Ascending aorta (tissue), 2 donors: ENCODE measurements at regions of chr22 and their contacts with region 1.

Region 1: DNA sequence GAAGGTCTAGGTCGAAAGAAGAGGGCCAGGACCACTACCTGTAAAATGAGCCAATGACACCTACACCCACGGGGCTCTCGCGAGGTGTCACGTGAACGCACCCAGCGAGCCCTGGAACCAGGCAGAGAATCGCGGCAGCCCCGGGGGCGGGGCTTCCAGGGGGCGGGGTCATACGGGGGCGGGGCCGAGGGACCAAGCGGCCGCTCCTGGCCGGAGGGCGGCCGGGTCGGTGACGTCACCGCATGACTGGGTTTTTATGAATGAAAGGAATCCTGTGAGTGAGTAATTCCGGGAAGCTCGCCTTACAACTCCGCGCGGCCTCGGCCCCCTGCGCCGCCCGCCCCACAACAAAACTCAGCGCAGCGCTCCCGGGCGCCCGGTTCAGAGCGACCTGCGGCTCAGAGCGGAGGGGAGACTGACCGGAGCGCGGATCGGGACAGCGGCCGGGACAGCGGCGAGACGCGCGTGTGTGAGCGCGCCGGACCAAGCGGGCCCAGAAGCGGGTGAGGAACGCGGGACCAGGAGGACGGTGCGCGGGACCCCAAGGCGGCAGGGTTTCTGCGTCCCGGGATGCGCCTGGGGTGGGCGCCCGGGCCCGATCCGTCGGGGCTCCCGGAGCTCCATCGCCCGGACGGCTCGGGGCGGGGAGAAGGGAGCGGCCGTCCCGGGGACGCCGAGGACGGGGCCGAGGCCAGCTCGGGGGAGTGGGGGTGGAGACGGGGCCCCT is at the start of gene MAFF:
- DNase-seq: peak; percentile 88 to 99
- H3K4me3 ChIP-seq: peak within 1 kb of the TSS; percentile 87 to 89
- H3K27ac ChIP-seq: peak within 1 kb of the TSS; percentile 99 to 100
- H3K4me1 ChIP-seq: peaks cover 19 to 26% of the 10 kb centered on the region in 2 donors
- H3K27me3 ChIP-seq: no peaks in the 10 kb centered on the region
- CTCF ChIP-seq: no peak
- total RNA-seq, gene MAFF: 183 TPM

Region 2: DNA sequence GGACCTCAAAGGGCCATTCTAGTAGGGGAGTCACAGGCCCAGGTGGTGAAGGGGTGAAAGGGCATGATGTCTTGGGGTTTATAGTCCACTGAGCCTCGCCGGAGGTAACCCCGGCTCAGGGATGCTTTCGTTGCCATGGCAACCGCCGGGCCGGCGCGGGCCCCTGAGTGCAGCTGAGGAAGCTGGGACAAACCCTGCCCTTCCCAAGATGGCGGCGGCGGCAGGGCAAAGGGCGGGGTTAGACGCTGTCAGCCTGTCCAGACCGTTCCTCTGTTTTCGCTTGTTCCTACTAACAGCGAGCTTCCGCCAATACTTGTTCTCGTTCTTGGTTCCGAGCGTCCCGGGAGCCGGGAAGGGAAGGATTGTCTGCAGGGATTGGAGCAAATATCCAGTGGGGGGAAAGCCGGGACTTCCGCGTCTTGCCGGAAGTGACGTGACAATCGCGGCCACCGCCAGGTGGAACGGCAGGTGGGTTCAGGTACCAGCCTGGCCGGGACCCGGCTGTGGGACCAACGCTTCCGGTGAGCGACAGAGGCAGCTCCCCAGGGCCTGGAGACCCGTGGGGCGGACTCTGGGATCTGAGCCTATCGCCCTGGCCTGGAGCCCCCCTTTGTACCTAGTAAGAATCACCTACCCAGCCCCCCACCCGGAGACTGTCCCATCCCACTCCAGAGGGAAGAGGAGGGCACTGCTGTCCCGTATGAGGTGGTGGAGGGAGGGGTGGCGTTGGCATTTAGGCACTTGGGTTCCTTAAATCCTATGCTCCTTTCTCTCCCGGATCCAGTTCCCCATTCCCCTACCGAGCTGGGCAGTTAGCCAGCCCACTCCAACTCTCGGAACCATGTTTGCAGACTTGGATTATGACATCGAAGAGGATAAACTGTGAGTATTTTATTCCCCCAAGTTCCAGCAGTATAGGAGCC is 144.6 kb before region 1 on chr22 and contains the start of gene PICK1:
- intact Hi-C with region 1: loop called (anchors 1 kb)
- DNase-seq: peak; percentile 85 to 97
- H3K4me3 ChIP-seq: peak within 1 kb of the TSS; percentile 65 to 70
- H3K27ac ChIP-seq: peak within 1 kb of the TSS; percentile 92 to 93
- H3K4me1 ChIP-seq: peaks cover 7 to 8% of the 10 kb centered on the region in 2 donors
- H3K27me3 ChIP-seq: no peaks in the 10 kb centered on the region
- CTCF ChIP-seq: no peak
- total RNA-seq, gene PICK1: 88.1 TPM

Region 3: GRCh38 chr22:38214256-38215056 is 12.6 kb after region 1 on chr22:
- intact Hi-C with region 1: loop called (anchors 2 kb)
- DNase-seq: no peak
- H3K4me3 ChIP-seq: peak overlapping the region in 1 of 2 donors; percentile 50
- H3K27ac ChIP-seq: peak overlapping the region; percentile 30 to 35
- H3K4me1 ChIP-seq: peaks cover 21 to 29% of the 10 kb centered on the region in 2 donors
- H3K27me3 ChIP-seq: no peaks in the 10 kb centered on the region
- CTCF ChIP-seq: peak in 1 of 3 experiments; percentile 24

Region 4: DNA sequence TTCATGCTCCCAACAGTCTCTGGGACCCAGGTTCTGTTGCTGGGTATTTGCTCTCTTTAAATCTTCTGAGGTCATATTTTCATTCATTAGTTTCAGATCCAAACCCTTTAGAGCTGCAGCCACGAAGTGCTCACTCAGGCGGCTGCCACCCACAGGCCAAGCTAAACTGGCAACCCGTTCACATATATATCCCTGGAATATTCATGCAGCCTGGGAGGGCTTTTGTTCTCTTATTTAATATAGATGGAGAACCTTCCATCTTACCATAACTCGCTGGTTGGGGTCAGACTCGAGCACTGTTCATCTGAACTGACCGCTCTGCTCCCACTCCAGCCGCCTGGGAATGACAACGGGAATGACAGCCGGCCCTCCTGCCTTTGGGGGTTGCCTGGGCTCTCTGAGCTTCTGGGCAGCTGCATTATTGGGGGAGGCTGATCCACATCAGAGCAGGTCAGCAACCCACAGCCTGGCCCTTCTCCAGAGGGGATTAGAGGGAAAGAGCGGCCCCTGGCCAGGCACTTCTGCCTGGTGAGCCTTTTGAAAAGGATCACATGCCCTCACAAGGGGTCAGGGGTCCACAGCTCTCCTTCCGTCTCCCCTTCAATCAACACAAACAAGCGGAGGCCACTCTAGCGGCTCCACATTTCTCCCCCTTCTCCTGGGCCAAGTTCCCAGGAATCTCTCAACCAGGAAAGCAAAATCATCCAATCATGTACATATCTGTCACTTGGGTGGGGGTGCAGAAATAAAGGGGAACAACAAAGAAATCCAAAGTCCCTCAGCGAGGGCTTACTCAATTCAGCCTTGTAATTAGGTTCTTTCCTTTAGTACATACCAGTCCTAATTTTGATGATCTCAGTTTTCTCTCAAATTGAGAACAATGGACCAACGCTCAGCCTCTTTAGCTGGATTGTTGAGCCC is 59.1 kb after region 1 on chr22:
- intact Hi-C with region 1: loop called (anchors 5 kb)
- DNase-seq: no peak
- H3K4me3 ChIP-seq: peak overlapping the region in 1 of 2 donors; percentile 16
- H3K27ac ChIP-seq: peak overlapping the region; percentile 83 to 88
- H3K4me1 ChIP-seq: peaks cover 12 to 50% of the 10 kb centered on the region in 2 donors
- H3K27me3 ChIP-seq: no peaks in the 10 kb centered on the region
- CTCF ChIP-seq: peak in 2 of 3 experiments; percentile 14 to 37

Region 5: DNA sequence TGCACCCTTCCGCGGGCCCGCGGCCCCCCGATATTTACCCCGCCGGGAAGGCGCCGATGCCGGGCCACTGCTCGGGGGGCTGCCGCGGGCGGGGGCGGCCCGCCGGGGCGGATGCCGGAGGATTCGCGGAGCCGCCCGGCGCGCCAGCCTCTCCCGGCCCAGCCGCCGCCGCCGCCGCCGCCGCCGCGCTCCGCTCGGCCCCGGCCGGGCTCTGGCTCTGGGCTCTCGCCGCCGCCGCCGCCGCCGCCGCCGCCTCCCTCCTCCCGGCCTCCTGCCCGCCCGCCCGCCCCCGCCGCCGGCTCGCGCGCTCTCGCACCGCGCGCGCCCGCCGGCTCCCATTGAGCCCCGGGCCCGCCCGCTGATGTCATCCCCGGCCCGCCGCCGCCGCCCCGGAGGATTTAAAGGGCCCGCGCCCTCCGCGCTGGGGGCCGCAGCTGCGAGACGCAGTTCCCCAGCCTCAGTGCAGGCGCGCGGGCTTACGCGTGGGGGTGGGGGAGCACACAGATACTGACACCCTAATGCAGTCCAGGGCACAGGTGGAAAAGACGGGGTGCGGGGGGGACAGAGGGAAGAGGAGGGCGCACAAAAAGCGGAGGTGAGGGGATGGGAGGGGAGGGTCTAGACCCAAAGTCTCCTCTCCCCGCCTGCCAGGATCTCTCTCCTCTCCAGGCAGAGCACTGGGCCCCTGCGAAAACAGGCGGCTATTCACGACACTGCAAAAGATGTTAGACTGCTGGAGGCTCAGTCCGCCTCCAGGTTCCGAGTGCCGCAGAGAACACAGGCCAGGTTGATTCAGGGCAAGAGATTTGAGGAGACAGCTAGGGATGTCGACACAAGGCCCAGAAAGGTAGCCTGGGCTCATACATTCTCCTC is 115.5 kb after region 1 on chr22 and contains the start of gene CSNK1E:
- intact Hi-C with region 1: loop called (anchors 2 kb)
- DNase-seq: peak; percentile 31 to 88
- H3K4me3 ChIP-seq: peak within 1 kb of the TSS; percentile 69 to 92
- H3K27ac ChIP-seq: peak within 1 kb of the TSS; percentile 97 to 100
- H3K4me1 ChIP-seq: peaks cover 10 to 37% of the 10 kb centered on the region in 2 donors
- H3K27me3 ChIP-seq: no peaks in the 10 kb centered on the region
- CTCF ChIP-seq: no peak
- total RNA-seq, gene CSNK1E: 185 TPM

Region 6: DNA sequence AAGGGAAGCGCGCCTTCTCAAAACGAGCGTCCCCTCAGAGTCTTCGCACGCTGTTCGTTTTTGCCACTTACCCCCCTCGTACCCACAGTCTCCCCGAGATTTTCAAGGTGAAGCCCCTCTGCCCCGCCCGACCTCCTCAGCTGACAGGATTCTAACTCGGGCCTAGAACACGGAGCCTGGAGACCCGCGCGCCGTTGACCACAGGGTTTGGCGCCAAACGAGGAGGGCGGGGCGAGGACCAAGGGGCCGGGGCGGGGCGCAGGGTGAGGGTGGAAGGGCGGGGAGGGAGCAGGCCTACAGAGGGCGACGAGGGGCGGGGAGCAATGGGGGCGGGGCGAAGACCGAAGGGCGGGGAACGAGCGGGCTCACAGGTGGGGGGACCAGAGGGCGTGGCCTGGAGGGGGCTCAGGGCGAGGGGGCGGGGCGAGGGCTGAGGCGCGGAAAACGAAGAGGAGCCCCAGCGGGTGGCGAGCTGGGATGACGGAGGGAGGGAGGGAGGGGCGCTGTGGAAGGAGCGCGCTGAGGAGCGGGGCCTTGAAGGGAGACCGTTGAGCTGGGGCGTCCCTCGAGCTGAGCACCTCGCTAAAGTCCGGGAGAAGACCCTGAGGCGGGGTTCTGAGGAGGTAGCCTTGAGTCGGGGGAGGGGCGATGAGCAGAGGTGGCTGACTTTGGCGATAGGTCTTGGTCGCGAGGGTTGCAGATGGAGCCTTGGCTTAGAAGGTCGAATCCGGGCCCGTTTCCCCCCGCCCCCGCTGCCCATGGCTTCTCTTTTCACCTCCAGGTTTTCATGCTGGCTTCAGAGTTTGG is 368.3 kb after region 1 on chr22 and contains the start of gene DMC1:
- intact Hi-C with region 1: loop called (anchors 5 kb)
- DNase-seq: peak; percentile 52 to 96
- H3K4me3 ChIP-seq: peak within 1 kb of the TSS; percentile 67 to 80
- H3K27ac ChIP-seq: peak within 1 kb of the TSS; percentile 91 to 95
- H3K4me1 ChIP-seq: peaks cover 4 to 35% of the 10 kb centered on the region in 2 donors
- H3K27me3 ChIP-seq: no peaks in the 10 kb centered on the region
- CTCF ChIP-seq: no peak
- total RNA-seq, gene DMC1: not detected